ENCODE measurements at regions of chr5 and their contacts with region 1.

Region 1: DNA sequence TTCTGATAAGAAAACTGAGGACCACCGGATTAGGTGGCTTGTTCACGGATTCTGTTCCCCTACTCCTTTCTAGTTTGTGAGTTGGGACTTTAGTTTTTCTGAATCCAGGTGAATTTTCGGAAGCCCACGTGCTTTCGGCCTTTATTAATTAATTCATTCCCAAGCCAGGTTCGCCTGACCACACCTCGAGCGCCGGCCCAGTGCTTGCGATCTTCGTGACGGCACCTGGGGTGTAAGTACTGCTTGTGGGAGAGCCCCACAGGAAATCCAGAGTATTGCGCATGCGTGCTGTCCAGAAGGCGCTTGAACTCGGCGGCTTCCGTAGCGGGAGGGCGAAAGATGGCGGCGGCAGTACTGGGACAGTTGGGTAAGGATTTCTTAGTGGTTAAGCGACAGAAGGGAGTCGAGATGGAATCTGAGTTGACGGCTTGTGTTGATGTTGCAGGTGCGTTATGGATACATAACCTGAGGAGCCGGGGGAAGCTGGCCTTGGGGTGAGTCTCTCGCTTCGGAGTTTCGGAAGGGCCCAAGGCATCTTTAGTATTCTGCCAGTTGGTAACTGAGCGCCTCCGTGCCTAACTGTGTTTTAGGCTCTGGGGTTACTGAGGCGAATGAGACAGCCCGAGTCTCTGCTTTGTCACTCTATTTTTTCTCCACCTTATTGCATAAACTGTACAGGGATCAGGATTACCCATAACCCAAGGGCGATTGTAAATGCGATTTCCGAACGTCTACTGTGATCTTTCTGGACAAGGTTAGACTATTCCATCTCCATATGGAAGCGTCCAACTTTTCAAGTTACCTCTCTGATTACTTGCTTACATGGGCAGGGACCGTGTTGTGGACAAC is at the start of gene MRPL22:
- DNase-seq: peak; percentile 90 to 94 (median 92)
- H3K4me3 ChIP-seq: peak within 1 kb of the TSS; percentile 53
- H3K27ac ChIP-seq: peak within 1 kb of the TSS in 1 of 2 donors; percentile 42
- H3K4me1 ChIP-seq: peaks cover 6% of the 10 kb centered on the region
- H3K27me3 ChIP-seq: no peaks in the 10 kb centered on the region
- CTCF ChIP-seq: peak in 2 of 3 donors; percentile 7 to 30
- EP300 ChIP-seq: no peak
- POLR2A ChIP-seq: peak; percentile 39
- total RNA-seq, gene MRPL22: 21.4 to 44.0 (median 38.1) TPM

Region 2: DNA sequence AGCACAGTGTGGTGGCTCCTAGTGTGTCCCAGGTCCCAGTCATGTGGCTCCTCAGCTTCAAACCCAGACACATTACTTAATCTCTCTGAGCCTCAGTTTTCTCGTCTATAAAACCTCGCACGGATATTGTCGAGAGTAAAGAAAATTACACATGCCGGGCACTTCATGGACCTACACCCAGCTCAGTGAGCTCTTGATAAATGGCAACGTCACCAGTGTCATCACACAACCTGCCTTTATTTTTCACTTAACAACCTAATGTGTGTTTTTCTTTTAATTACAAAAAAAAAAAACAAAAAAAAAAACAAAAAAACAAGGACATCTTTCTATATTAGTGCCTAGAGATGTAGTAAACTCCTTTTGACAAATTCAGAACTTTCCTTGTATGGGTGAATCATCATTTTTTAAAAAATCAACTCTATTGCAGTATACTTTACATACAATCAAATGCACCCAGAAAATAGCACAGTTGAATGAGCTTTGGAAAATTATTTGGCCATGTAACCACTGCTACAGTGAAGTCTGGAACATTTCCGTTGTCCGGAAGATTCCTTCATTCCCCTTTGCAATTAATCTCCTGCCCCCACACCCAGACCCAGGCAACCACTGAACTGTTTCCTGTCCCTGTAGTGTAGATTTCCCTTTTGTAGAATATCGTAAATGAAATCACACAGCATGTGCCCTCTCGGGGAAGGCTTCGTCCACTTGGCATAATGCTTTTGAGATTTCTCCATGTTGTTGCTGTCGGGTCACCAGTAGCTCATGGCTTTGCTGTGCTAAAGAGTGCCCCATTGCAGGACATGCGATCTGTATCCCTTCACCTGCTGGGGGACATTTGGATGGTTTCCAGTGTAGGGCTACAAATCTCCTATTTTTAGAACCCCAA is 286.3 kb before region 1 on chr5:
- intact Hi-C with region 1: loop called in 1 of 4 experiments (anchors 10 kb)
- DNase-seq: no peak
- H3K4me3 ChIP-seq: peak overlapping the region; percentile 20
- H3K27ac ChIP-seq: peak overlapping the region in 1 of 2 donors; percentile 50
- H3K4me1 ChIP-seq: peaks cover 8% of the 10 kb centered on the region
- H3K27me3 ChIP-seq: no peaks in the 10 kb centered on the region
- CTCF ChIP-seq: no peak
- EP300 ChIP-seq: no peak
- POLR2A ChIP-seq: no peak

Region 3: GRCh38 chr5:154868702-154869101 is 72.3 kb before region 1 on chr5:
- intact Hi-C with region 1: loop called in 1 of 4 experiments (anchors 10 kb)
- DNase-seq: no peak
- H3K4me3 ChIP-seq: no peak overlapping the region
- H3K27ac ChIP-seq: no peak overlapping the region
- H3K4me1 ChIP-seq: peaks cover 4% of the 10 kb centered on the region
- H3K27me3 ChIP-seq: no peaks in the 10 kb centered on the region
- CTCF ChIP-seq: no peak
- EP300 ChIP-seq: no peak
- POLR2A ChIP-seq: no peak

Measured in ovary (tissue), 10 donors.